HepG2 (cell line): ENCODE measurements at regions of chr6 and their contacts with region 1.

Region 1: DNA sequence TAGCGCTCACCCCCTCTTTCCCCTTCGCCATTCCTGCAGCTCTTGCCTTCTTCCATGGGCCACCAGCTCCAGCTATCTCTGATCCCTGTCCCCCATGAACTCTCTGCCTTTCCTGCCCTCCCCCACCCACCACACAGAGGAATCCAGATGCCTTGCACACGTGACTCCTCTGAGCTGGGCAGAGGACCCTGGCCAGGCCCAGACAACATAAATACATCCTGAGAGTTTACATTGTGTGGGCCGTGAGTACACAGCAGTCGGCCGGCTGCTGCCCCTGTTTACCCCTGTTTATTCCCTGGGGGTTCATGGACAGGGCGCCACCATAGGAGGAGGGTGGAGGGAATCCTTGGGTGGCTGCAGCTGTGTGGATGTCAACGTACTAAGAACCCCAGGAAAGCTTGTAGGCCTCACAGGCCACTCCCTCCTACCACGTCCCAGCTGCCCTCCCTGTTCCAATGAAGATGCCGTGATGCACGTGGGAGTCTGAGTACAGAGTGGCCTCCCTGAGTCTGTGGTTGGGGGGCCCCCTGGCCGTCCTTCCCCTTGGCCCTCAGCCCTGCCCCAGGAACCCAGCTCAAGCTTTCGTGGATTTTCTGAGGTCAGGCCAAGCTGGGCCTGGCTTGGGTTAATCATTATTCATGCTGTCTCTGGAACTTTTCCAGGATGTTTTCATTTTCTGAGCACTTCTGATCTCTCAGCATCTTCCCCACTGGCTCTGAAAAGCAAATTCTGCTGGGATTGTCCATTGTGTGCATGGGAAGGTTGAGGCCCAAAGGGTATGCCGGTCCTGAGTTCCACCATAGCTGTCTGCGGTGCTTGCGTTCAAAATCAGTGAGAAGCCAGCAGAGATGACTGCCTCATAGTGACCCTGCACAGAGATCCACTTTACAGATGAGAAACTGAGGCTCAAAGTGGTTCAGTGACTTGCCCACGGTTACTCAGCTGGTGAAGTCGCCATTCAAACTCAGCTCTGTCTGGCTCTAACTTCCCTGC is 136.3 kb downstream of the MRPL14 start:
- DNase-seq: peak; percentile 93
- ATAC-seq: peak; percentile 83
- H3K4me3 ChIP-seq: peak overlapping the region; percentile 43 to 76 (median 55)
- H3K27ac ChIP-seq: peak overlapping the region; percentile 62
- H3K4me1 ChIP-seq: peaks cover 91% of the 10 kb centered on the region
- H3K27me3 ChIP-seq: peaks cover 16 to 29% of the 10 kb centered on the region in 2 experiments; a peak in 4 of 5 replicates
- CTCF ChIP-seq: peak; percentile 27; the same call in 1 of the 2 replicates
- EP300 ChIP-seq: peak in 1 of 2 experiments; percentile 80; a peak in 2 of 4 replicates
- POLR2A ChIP-seq: peak in 1 of 2 experiments; percentile 14; a peak in 1 of 4 replicates
- RAD21 ChIP-seq: no peak

Region 2: GRCh38 chr6:44041461-44042260 is 50.7 kb after region 1 on chr6:
- CTCF ChIA-PET with region 1: no interaction called
- POLR2A ChIA-PET with region 1: no interaction called
- in situ Hi-C with region 1: no loop called
- intact Hi-C with region 1: loop called (anchors 5 kb)
- DNase-seq: no peak
- ATAC-seq: no peak
- H3K4me3 ChIP-seq: no peak overlapping the region
- H3K27ac ChIP-seq: no peak overlapping the region
- H3K4me1 ChIP-seq: peaks cover 51% of the 10 kb centered on the region
- H3K27me3 ChIP-seq: peaks cover 1 to 18% of the 10 kb centered on the region in 2 experiments
- CTCF ChIP-seq: no peak
- EP300 ChIP-seq: no peak
- POLR2A ChIP-seq: no peak
- RAD21 ChIP-seq: no peak

Region 3: GRCh38 chr6:44966449-44967092 is 975.6 kb after region 1 on chr6:
- CTCF ChIA-PET with region 1: no interaction called
- POLR2A ChIA-PET with region 1: no interaction called
- in situ Hi-C with region 1: no loop called
- intact Hi-C with region 1: no loop called
- DNase-seq: peak; percentile 24
- ATAC-seq: no peak
- H3K4me3 ChIP-seq: no peak overlapping the region
- H3K27ac ChIP-seq: no peak overlapping the region
- H3K4me1 ChIP-seq: no peaks in the 10 kb centered on the region
- H3K27me3 ChIP-seq: no peaks in the 10 kb centered on the region
- CTCF ChIP-seq: no peak
- EP300 ChIP-seq: no peak
- POLR2A ChIP-seq: no peak
- RAD21 ChIP-seq: no peak